ENCODE measurements at regions of chr2 and their contacts with region 1.

Region 1: DNA sequence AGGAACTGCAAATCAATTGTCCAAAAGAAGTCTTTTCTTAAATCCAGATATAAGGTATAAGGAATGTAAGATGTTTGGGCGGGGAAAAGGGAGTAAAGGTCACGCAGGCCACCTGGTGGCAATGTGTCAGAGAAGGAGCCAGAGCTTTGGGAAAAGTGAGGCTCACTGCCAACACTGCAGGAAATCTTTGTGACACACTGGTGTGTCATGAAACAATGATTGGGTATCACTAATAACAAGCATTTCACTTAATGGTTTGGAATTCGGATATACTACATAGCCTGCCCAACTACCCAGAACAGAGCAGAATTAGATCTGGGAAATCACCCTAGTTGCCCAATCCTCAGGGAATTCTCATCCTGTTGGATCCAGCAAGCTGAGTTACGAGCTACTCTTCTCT is 61.0 kb downstream of the RBMS1 start:
- DNase-seq: no peak
- ATAC-seq: no peak

Region 2: DNA sequence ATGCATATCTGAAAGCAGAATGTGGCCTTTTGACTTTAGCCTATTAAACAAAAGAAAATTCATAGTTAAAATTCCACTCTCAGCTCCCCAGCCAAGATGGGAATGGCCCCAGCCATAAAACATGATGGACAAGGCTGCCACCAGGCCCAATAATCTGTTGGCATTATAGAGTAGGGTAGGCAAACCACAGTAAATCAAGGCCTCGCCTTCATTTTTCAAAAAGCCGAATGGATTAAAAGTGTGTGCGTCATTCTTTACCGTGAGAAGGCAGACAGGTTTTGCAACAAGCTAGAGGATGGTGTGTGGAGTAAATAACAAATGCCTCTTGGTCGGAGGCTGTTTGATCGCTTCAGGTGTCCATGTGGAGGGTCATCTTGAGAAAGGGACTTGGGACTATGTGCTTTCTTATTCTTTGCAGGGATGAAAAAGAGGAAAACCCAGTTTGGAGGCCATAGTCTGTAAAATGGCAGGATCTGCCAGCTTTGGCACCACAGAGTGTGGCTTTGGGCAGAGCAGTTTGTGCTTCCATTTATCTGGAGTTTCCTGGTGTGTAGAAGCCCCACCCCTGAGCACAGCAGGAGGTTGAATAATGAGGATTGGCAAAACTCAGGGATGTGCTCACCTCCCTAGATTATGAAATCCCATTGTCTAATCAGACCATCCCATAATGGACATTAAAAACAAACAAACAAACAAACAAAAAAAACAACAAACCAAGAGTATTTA is 175.5 kb before region 1 on chr2:
- intact Hi-C with region 1: no loop called
- DNase-seq: no peak
- ATAC-seq: no peak

Region 3: DNA sequence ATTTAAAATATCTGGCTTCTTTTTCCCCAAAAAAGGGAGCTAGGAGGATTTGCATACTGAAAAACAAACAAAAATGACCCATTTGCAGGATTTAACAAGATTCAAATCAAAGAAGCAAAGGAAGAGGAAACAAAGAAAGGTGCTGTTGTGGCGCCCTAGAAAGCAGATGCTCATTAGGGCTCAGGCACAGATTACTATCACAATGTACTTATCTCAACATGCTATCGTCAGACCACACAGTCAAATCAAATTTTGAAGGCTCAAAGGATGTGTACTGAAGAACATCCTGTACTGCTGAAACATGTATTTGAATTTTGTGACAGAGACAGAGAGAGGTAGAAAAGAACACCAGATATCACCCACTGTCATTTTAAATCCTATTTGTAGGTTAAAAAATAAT is 50.0 kb after region 1 on chr2:
- intact Hi-C with region 1: loop called in 1 of 2 experiments (anchors 10 kb)
- DNase-seq: no peak
- ATAC-seq: peak; percentile 23 to 34

Region 4: GRCh38 chr2:160493227-160494028 is 60.8 kb after region 1 on chr2 and contains the start of gene RBMS1:
- intact Hi-C with region 1: loop called (anchors 5 to 10 kb)
- DNase-seq: peak; percentile 75
- ATAC-seq: peak; percentile 72 to 82
- total RNA-seq, gene RBMS1: 56.8 to 74.8 TPM

Measured in left cardiac atrium (tissue), 4 donors.